Activated CD8-positive, alpha-beta memory T cell treated with anti-CD3 and anti-CD28 coated beads, Interleukin-2, amount 10 ng/mL, durations not matched to agents 7 days and 5 days (primary cell): ENCODE measurements at regions of chr2 and their contacts with region 1.

Region 1: GRCh38 chr2:99141110-99142108 is at the start of gene C2orf15:
- DNase-seq: peak; percentile 96
- ATAC-seq: peak; percentile 93
- H3K4me3 Mint-ChIP-seq: peak within 1 kb of the TSS; percentile 97
- H3K27ac Mint-ChIP-seq: peak within 1 kb of the TSS; percentile 87
- H3K4me1 Mint-ChIP-seq: peaks cover 25% of the 10 kb centered on the region
- H3K27me3 Mint-ChIP-seq: peaks cover 3% of the 10 kb centered on the region
- total RNA-seq, gene C2orf15: 0.47 to 0.58 TPM

Region 2: GRCh38 chr2:99111236-99111635 is 30.2 kb before region 1 on chr2:
- CTCF ChIA-PET with region 1: no interaction called
- DNase-seq: no peak
- ATAC-seq: no peak
- H3K4me3 Mint-ChIP-seq: no peak overlapping the region
- H3K27ac Mint-ChIP-seq: no peak overlapping the region
- H3K4me1 Mint-ChIP-seq: no peaks in the 10 kb centered on the region
- H3K27me3 Mint-ChIP-seq: peaks cover 2% of the 10 kb centered on the region

Region 3: GRCh38 chr2:99180755-99181623 is 39.6 kb after region 1 on chr2 and contains the starts of genes MITD1 and MRPL30:
- CTCF ChIA-PET with region 1: interaction called, 11 read pairs
- DNase-seq: peak; percentile 94
- ATAC-seq: peak; percentile 96
- H3K4me3 Mint-ChIP-seq: peak within 1 kb of the TSS; percentile 98
- H3K27ac Mint-ChIP-seq: peak within 1 kb of the TSS; percentile 94
- H3K4me1 Mint-ChIP-seq: peaks cover 53% of the 10 kb centered on the region
- H3K27me3 Mint-ChIP-seq: no peaks in the 10 kb centered on the region
- total RNA-seq, gene MITD1: 57.4 to 63.1 TPM
- total RNA-seq, gene MRPL30: 24.4 to 26.2 TPM